Panc1 (cell line): ENCODE measurements at regions of chr2 and their contacts with region 1.

Region 1: DNA sequence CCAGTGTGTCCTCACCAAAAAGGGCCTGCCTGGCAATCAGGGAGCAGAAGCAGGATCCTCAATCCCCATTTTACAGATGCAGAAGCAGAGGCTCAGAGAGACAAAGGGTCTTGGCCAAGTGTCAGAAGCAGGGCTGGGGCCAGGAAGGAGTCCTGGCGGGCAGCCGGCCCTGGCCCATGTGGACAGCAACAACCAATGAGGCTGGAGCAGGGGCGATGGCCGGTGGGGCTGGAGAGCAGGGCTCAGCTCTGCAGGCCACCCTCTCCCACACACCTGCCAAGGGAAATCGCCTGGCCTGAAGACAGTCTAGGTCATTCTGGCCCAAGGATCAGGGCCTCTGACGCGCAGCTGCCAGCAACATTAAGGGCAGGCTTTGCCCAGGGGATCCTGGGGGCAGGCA is 243.9 kb downstream of the ATAD2B start:
- DNase-seq: no peak
- ATAC-seq: no peak
- H3K4me3 ChIP-seq: no peak overlapping the region
- H3K27ac ChIP-seq: no peak overlapping the region
- H3K4me1 ChIP-seq: no peaks in the 10 kb centered on the region
- H3K27me3 ChIP-seq: no peaks in the 10 kb centered on the region
- CTCF ChIP-seq: no peak

Region 2: GRCh38 chr2:23664066-23664788 is 18.8 kb before region 1 on chr2:
- CTCF ChIA-PET with region 1: no interaction called
- POLR2A ChIA-PET with region 1: interaction called, 12 read pairs
- in situ Hi-C with region 1: no loop called
- intact Hi-C with region 1: no loop called
- DNase-seq: no peak
- ATAC-seq: no peak
- H3K4me3 ChIP-seq: no peak overlapping the region
- H3K27ac ChIP-seq: no peak overlapping the region
- H3K4me1 ChIP-seq: no peaks in the 10 kb centered on the region
- H3K27me3 ChIP-seq: no peaks in the 10 kb centered on the region
- CTCF ChIP-seq: no peak